ENCODE measurements at regions of chr22 and their contacts with region 1.

Region 1: GRCh38 chr22:46674367-46674781 is 54.2 kb downstream of the GRAMD4 start:
- DNase-seq: peak; percentile 57 to 96 (median 85)
- ATAC-seq: peak; percentile 89
- H3K4me3 ChIP-seq: peak overlapping the region; percentile 73
- H3K4me3 Mint-ChIP-seq: peak overlapping the region; percentile 88 to 98 (median 92)
- H3K27ac ChIP-seq: peak overlapping the region; percentile 71
- H3K27ac Mint-ChIP-seq: peak overlapping the region; percentile 92 to 99 (median 94)
- H3K4me1 ChIP-seq: peaks cover 12 to 32% of the 10 kb centered on the region in 2 donors
- H3K4me1 Mint-ChIP-seq: peaks cover 24 to 36% (median 30%) of the 10 kb centered on the region in 7 donors
- H3K27me3 ChIP-seq: no peaks in the 10 kb centered on the region
- H3K27me3 Mint-ChIP-seq: no peaks in the 10 kb centered on the region

Region 2: DNA sequence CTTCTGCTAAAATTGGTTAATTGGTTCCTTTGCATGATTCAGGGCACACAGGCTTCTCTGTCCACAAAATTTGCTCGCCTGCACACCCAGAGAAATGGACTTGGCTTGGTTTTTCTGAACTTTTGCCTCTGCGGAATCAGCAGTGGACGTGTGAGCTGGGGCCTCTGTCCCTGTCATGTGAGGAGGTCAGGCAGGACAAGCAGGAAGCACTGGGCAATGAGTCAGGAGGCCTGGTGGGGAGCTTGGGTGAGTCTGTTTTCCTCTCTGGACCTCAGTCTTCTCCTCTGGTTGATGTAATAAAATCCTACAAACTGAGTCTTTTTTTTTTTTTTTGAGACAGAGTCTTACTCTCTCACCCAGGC is 126.5 kb before region 1 on chr22:
- CTCF ChIA-PET with region 1: no interaction called
- POLR2A ChIA-PET with region 1: no interaction called
- intact Hi-C with region 1: no loop called
- DNase-seq: no peak
- ATAC-seq: peak; percentile 76
- H3K4me3 ChIP-seq: no peak overlapping the region
- H3K4me3 Mint-ChIP-seq: no peak overlapping the region
- H3K27ac ChIP-seq: no peak overlapping the region
- H3K27ac Mint-ChIP-seq: no peak overlapping the region
- H3K4me1 ChIP-seq: no peaks in the 10 kb centered on the region
- H3K4me1 Mint-ChIP-seq: peaks cover 0 to 6% (median 0%) of the 10 kb centered on the region in 7 donors
- H3K27me3 ChIP-seq: no peaks in the 10 kb centered on the region
- H3K27me3 Mint-ChIP-seq: peaks cover 0 to 11% (median 6%) of the 10 kb centered on the region in 5 donors

Region 3: DNA sequence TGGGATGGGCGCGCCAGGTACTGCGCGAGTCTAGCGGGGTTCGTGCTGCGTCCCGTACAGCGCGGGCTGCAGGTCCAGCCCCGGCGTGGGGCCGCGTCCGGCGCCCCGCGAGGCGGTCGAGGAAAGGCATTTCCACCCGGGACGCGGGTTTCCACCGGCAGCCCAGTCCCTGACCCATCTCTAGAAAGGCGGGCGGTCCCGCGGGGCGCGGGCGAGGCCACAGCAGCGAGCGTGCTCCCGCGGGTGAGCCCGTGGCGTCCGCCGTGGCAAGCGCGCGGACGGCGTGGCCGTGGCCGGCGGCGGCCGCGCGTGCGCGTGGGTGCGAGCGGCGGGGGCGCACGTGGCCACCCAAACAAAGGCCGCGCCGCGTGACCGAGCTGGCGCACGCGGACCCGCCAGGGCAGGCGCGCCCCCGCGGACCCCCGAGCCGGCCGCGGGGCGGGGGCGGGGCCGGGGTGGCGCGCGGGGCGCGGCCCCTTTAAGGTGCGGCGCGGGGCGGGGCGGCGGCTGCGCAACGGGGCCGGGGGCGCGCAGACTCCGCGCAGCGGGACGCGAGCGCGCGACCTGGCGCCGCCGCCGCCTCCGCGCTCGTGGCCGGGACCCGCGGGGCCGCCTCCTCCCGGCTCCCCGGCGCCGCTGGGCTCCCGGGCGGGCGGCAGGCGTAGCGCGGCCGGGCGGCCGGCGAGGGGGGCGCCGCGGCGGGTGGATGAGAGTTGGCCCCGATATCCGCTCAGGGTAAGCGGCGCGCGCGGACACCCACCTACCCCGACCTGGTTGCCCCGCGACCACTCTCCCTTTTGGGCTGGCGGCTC is 97.6 kb before region 1 on chr22:
- CTCF ChIA-PET with region 1: no interaction called
- POLR2A ChIA-PET with region 1: no interaction called
- intact Hi-C with region 1: loop called (anchors 1 kb)
- DNase-seq: peak; percentile 44 to 82 (median 65)
- ATAC-seq: peak; percentile 89
- H3K4me3 ChIP-seq: peak overlapping the region; percentile 66
- H3K4me3 Mint-ChIP-seq: peak overlapping the region; percentile 72 to 91 (median 84)
- H3K27ac ChIP-seq: peak overlapping the region; percentile 37
- H3K27ac Mint-ChIP-seq: peak overlapping the region in 7 of 9 donors; percentile 70 to 84 (median 77)
- H3K4me1 ChIP-seq: peaks cover 16 to 25% of the 10 kb centered on the region in 2 donors
- H3K4me1 Mint-ChIP-seq: peaks cover 36 to 51% (median 47%) of the 10 kb centered on the region in 7 donors
- H3K27me3 ChIP-seq: no peaks in the 10 kb centered on the region
- H3K27me3 Mint-ChIP-seq: no peaks in the 10 kb centered on the region

Region 4: GRCh38 chr22:46613606-46614021 is 60.8 kb before region 1 on chr22:
- CTCF ChIA-PET with region 1: no interaction called
- POLR2A ChIA-PET with region 1: no interaction called
- intact Hi-C with region 1: loop called (anchors 1 to 2 kb)
- DNase-seq: peak in 1 of 9 donors; percentile 33
- ATAC-seq: no peak
- H3K4me3 ChIP-seq: peak overlapping the region; percentile 71
- H3K4me3 Mint-ChIP-seq: peak overlapping the region; percentile 88 to 96 (median 92)
- H3K27ac ChIP-seq: no peak overlapping the region
- H3K27ac Mint-ChIP-seq: peak overlapping the region; percentile 72 to 95 (median 85)
- H3K4me1 ChIP-seq: peaks cover 23 to 24% of the 10 kb centered on the region in 2 donors
- H3K4me1 Mint-ChIP-seq: peaks cover 22 to 39% (median 29%) of the 10 kb centered on the region in 7 donors
- H3K27me3 ChIP-seq: no peaks in the 10 kb centered on the region
- H3K27me3 Mint-ChIP-seq: no peaks in the 10 kb centered on the region

Region 5: DNA sequence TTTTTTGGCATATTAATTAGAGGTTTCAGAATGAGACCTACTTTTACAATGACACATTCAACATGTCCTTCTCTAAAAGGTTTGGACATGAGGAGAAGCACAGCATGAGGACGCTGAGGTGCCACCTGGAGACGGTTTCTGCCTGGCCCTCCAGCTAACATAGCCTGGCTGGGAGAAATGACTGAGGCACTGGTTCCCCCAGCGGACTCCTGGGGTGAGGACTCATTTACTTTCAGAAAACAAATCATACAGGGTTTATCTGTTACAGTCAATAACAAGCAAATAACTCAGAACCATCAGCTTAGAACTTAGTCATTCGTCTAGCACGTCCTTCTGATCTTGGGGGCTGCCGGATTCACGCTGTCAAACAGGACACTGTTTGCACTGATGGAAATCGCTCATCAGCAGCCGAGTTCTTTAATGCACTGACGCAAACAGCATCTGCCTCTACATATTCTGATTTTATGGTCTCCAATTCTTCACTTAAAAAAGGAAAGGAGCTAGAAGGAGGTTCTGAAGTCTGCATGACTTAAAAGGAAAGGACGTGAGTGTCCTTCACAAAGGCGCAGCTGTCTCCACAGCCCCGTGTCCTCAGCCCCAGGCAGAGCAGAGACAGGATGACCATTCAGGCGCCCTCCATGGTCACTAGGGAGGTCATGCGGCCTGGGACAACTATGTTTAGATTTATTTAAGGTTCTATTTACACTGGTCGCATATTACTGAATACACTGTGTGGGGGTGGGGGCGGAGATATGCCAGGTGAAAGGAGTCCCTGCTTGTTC is 19.5 kb after region 1 on chr22:
- CTCF ChIA-PET with region 1: no interaction called
- POLR2A ChIA-PET with region 1: no interaction called
- intact Hi-C with region 1: loop called in 1 of 2 experiments (anchors 2 kb)
- DNase-seq: no peak
- ATAC-seq: no peak
- H3K4me3 ChIP-seq: no peak overlapping the region
- H3K4me3 Mint-ChIP-seq: no peak overlapping the region
- H3K27ac ChIP-seq: no peak overlapping the region
- H3K27ac Mint-ChIP-seq: peak overlapping the region in 2 of 9 donors; percentile 15 to 38
- H3K4me1 ChIP-seq: no peaks in the 10 kb centered on the region
- H3K4me1 Mint-ChIP-seq: peaks cover 0 to 5% (median 0%) of the 10 kb centered on the region in 7 donors
- H3K27me3 ChIP-seq: no peaks in the 10 kb centered on the region
- H3K27me3 Mint-ChIP-seq: no peaks in the 10 kb centered on the region

Region 6: GRCh38 chr22:46791201-46791731 is 116.9 kb after region 1 on chr22:
- CTCF ChIA-PET with region 1: no interaction called
- POLR2A ChIA-PET with region 1: no interaction called
- intact Hi-C with region 1: loop called in 1 of 2 experiments (anchors 1 kb)
- DNase-seq: peak; percentile 51 to 90 (median 81)
- ATAC-seq: peak; percentile 97
- H3K4me3 ChIP-seq: peak overlapping the region; percentile 33
- H3K4me3 Mint-ChIP-seq: peak overlapping the region; percentile 54 to 90 (median 84)
- H3K27ac ChIP-seq: peak overlapping the region; percentile 81
- H3K27ac Mint-ChIP-seq: peak overlapping the region; percentile 99 to 100 (median 100)
- H3K4me1 ChIP-seq: peaks cover 30 to 35% of the 10 kb centered on the region in 2 donors
- H3K4me1 Mint-ChIP-seq: peaks cover 27 to 62% (median 49%) of the 10 kb centered on the region in 7 donors
- H3K27me3 ChIP-seq: no peaks in the 10 kb centered on the region
- H3K27me3 Mint-ChIP-seq: no peaks in the 10 kb centered on the region

Measured in naive thymus-derived CD4-positive, alpha-beta T cell (primary cell).